ENCODE measurements at regions of chr1 and their contacts with region 1.

Region 1: DNA sequence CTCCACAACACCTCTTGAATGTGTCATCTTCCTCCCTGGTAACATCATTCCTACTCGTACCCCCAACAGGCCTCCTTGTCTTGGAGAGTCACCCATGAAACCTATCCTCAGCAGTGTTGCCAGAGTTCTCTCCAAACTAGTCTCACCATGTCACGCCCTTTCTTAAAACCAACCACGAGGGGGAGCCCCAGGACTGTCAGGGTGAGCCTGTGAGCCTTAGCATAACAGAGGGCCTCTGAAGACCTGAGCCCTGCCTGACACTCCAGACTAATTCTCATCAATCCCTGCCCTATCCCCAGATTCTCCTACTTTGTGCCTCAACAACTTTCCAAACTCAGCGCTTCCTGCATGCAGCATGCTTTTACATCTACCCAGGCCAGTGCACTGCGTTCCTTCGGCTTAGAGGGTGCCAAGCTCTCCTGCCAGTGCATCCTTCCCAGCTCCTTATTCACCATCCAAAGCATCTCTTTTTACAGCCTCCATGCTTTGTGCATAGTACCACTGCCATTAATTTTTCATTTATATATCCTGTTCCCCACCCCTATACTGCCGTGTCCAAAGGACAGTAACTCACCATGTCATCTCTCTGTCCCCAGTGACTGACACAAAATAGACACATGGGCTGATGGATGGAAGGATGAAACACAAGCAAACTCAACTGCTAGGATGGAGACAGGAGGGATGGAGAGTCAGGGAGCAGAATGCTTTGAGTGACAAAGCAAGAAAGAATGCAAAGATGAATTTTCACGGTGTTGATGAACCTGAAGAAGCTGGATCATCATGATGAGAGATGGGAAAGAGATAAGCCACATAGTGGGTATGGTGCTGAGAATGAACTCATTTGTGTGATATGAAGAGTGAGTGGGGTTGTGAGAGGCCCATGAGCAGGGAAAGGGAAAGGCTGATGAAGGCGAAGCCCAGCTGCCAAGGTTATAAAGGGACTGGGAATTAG is 34.0 kb downstream of the ZNF697 start:
- DNase-seq: peak; percentile 35
- H3K4me3 ChIP-seq: no peak overlapping the region
- H3K27ac ChIP-seq: no peak overlapping the region
- H3K4me1 ChIP-seq: peaks cover 3 to 14% (median 5%) of the 10 kb centered on the region in 3 donors
- H3K27me3 ChIP-seq: no peaks in the 10 kb centered on the region
- CTCF ChIP-seq: peak; percentile 44 to 90 (median 78)
- POLR2A ChIP-seq: no peak

Region 2: DNA sequence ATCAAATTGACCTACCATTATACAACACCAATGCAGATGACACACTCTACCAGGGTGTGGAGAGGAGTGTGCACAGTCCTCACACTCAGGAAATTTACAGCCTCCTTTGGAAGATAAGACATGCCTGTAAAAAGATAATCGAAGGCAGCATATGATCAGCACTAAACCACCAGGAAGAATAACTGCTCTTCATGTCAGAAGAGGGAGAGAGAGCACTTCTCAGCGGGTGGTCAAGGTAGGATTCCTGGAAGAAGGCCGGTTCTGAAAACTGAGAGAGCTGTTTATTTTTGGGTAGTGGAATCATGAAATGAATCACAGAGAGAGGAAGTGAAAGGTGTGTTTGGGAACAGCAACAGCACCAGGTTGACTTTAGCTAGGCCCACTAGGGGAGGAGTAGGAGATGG is 48.0 kb after region 1 on chr1:
- intact Hi-C with region 1: loop called (anchors 5 kb)
- DNase-seq: no peak
- H3K4me3 ChIP-seq: no peak overlapping the region
- H3K27ac ChIP-seq: no peak overlapping the region
- H3K4me1 ChIP-seq: peaks cover 0 to 18% (median 0%) of the 10 kb centered on the region in 3 donors
- H3K27me3 ChIP-seq: no peaks in the 10 kb centered on the region
- CTCF ChIP-seq: no peak
- POLR2A ChIP-seq: no peak

Region 3: DNA sequence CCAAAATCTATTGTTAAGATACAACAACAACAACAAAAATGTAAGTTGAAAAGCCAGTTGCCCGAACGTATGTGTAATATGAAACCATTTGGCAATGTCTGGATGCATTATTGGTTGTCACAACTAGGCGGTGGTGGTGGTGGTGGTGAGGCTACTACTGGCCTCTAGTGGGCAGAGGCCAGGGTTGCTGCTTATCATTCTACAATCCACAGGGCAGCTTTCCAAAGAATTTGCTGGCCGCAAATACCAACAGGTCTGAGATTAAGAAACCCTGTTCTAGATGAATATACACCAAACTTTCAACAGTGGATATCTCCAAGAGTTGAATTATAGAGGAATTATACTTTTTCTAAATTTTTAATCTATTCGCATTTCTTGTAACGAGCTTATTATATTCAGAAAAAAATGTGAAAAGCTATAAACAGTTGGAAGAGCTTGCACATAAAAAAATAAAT is 60.8 kb after region 1 on chr1:
- intact Hi-C with region 1: loop called (anchors 5 kb)
- DNase-seq: no peak
- H3K4me3 ChIP-seq: peak overlapping the region in 3 of 4 donors; percentile 36 to 66 (median 42)
- H3K27ac ChIP-seq: peak overlapping the region in 1 of 4 donors; percentile 57
- H3K4me1 ChIP-seq: peaks cover 5 to 24% (median 8%) of the 10 kb centered on the region in 3 donors
- H3K27me3 ChIP-seq: no peaks in the 10 kb centered on the region
- CTCF ChIP-seq: peak in 2 of 6 experiments; percentile 38 to 77
- POLR2A ChIP-seq: no peak

Region 4: GRCh38 chr1:119711804-119712341 is 97.8 kb after region 1 on chr1 and contains the start of gene PHGDH:
- intact Hi-C with region 1: no loop called
- DNase-seq: no peak
- H3K4me3 ChIP-seq: peak within 1 kb of the TSS; percentile 49 to 72 (median 64)
- H3K27ac ChIP-seq: peak within 1 kb of the TSS; percentile 65 to 88 (median 86)
- H3K4me1 ChIP-seq: peaks cover 10 to 47% (median 22%) of the 10 kb centered on the region in 3 donors
- H3K27me3 ChIP-seq: peaks cover 0 to 12% (median 0%) of the 10 kb centered on the region in 4 donors
- CTCF ChIP-seq: no peak
- POLR2A ChIP-seq: peak in 2 of 4 donors; percentile 32 to 66
- total RNA-seq, gene PHGDH: 34.5 to 89.7 (median 43.2) TPM

Region 5: GRCh38 chr1:119727996-119728395 is 114.0 kb after region 1 on chr1:
- intact Hi-C with region 1: no loop called
- DNase-seq: no peak
- H3K4me3 ChIP-seq: no peak overlapping the region
- H3K27ac ChIP-seq: peak overlapping the region in 2 of 4 donors; percentile 36 to 62
- H3K4me1 ChIP-seq: peaks cover 0 to 13% (median 4%) of the 10 kb centered on the region in 3 donors
- H3K27me3 ChIP-seq: no peaks in the 10 kb centered on the region
- CTCF ChIP-seq: no peak
- POLR2A ChIP-seq: no peak

Measured in esophagus squamous epithelium (tissue), 5 donors.